ENCODE measurements at regions of chr1 and their contacts with region 1.

Region 1: GRCh38 chr1:245874942-245875580 is 632.0 kb downstream of the SMYD3 start:
- DNase-seq: peak; percentile 95
- H3K4me3 ChIP-seq: no peak overlapping the region
- H3K27ac ChIP-seq: peak overlapping the region; percentile 50
- H3K4me1 ChIP-seq: peaks cover 22% of the 10 kb centered on the region
- H3K27me3 ChIP-seq: no peaks in the 10 kb centered on the region
- CTCF ChIP-seq: no peak
- POLR2A ChIP-seq: no peak

Region 2: DNA sequence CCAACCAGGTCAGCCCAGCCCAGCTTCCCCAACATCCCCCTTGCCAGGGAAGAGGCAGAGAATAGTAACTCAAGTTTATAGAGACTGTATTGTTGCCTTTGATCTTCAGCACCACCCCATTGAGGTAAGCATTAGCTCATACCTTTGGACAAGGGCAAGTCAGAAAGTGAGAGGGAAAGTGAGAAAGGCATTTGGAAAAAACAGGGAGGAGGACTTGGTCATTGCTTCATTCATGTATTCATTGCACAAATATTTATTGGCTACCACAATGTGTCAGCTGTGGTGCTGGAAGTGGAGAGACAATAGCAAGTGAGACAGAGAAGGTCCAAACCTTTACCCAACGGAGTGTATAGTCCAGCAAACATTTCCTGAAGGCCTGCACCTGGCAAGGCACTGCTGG is 159.1 kb before region 1 on chr1:
- CTCF ChIA-PET with region 1: no interaction called
- POLR2A ChIA-PET with region 1: no interaction called
- dilution Hi-C with region 1: no loop called
- intact Hi-C with region 1: no loop called
- DNase-seq: no peak
- H3K4me3 ChIP-seq: no peak overlapping the region
- H3K27ac ChIP-seq: no peak overlapping the region
- H3K4me1 ChIP-seq: no peaks in the 10 kb centered on the region
- H3K27me3 ChIP-seq: no peaks in the 10 kb centered on the region
- CTCF ChIP-seq: no peak
- POLR2A ChIP-seq: no peak

Region 3: GRCh38 chr1:245953876-245954660 is 79.0 kb after region 1 on chr1:
- CTCF ChIA-PET with region 1: no interaction called
- POLR2A ChIA-PET with region 1: no interaction called
- dilution Hi-C with region 1: no loop called
- intact Hi-C with region 1: loop called (anchors 5 kb)
- DNase-seq: peak; percentile 63
- H3K4me3 ChIP-seq: peak overlapping the region in 1 of 3 experiments; percentile 66
- H3K27ac ChIP-seq: peak overlapping the region; percentile 20
- H3K4me1 ChIP-seq: peaks cover 14% of the 10 kb centered on the region
- H3K27me3 ChIP-seq: no peaks in the 10 kb centered on the region
- CTCF ChIP-seq: no peak
- POLR2A ChIP-seq: no peak

Region 4: GRCh38 chr1:245986404-245987220 is 111.6 kb after region 1 on chr1:
- CTCF ChIA-PET with region 1: no interaction called
- POLR2A ChIA-PET with region 1: no interaction called
- dilution Hi-C with region 1: no loop called
- intact Hi-C with region 1: loop called (anchors 1 kb)
- DNase-seq: peak; percentile 86
- H3K4me3 ChIP-seq: no peak overlapping the region
- H3K27ac ChIP-seq: peak overlapping the region; percentile 35
- H3K4me1 ChIP-seq: peaks cover 12% of the 10 kb centered on the region
- H3K27me3 ChIP-seq: no peaks in the 10 kb centered on the region
- CTCF ChIP-seq: no peak
- POLR2A ChIP-seq: no peak

Measured in endothelial cell of umbilical vein (primary cell).